Esophagus squamous epithelium (tissue), 5 donors: ENCODE measurements at regions of chr3 and their contacts with region 1.

Region 1: DNA sequence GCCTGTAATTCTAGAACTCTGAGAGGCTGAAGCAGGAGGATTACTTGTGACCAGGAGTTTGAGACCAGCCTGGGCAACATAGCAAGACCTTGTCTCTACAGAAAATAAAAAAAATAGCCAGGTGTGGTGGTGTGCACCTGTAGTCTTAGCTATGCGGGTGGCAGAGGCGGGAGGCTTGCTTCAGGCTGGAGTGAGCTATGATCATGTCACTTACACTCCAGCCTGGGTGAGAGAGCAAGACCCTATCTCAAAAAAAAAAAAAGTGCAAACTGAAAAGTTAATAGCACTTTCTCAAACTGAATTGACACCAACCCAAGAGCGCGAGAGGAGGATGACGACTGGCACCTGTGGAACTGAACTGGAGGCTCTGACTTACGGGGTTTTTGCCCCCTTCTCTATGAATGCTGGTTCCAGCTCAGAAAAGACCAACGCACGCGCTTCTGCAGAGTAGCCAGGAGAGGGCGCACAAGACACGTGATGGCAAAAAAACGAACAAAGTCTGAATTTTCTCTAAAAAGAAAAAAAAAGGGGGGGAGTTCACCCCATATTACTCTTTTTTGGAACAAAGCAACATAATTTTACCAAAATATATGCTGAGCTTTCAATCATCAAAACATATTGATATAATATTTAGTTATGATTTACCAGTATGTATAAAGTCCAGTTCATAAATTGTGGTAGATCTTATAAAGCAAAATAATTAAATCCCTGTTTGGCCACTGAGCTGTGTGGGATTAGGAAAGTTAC is 23.7 kb downstream of the CFAP92 start:
- DNase-seq: no peak
- H3K4me3 ChIP-seq: no peak overlapping the region
- H3K27ac ChIP-seq: peak overlapping the region in 1 of 4 donors; percentile 71
- H3K4me1 ChIP-seq: peaks cover 0 to 31% (median 4%) of the 10 kb centered on the region in 3 donors
- H3K27me3 ChIP-seq: no peaks in the 10 kb centered on the region
- CTCF ChIP-seq: peak; percentile 50 to 92 (median 86)
- POLR2A ChIP-seq: no peak

Region 2: DNA sequence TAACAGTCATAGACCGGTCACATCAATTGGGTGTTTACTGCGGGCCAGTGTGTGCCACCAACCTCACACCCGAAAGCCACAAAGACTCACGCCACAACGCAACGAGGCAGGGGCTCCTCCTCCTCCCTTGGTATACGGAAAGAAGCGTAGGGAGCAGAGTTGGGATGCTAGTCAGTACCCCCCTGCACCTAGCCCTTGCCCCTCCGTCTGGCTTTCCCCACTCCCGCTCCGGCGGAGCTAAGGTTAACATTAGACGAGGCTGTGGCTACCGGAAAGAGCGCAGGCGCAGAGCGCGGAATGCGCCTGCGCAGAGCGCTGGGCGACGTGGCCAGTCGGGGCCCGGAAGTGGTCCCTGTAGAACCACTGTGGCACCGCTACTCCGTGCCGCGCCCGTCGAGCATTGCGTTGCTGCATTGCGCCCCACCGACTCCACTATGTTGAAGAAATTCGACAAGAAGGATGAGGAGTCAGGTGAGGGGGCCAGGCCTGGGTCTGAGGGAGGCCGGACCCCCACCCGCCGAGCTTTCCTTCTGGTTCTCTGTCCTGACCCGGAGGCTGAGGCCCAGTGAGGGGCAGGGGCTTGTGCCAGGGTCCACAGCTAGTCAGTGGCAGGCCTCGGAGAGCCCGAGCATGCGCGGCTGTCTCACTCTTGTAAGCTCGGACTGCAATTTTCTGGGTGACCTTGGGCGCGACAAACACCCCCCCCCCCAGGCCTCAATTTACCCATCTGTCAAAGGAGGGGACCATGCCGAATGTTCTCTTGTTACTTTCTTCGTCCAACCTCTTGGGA is 279.3 kb after region 1 on chr3 and contains the start of gene COPG1:
- intact Hi-C with region 1: loop called (anchors 10 kb)
- DNase-seq: peak; percentile 26
- H3K4me3 ChIP-seq: peak within 1 kb of the TSS; percentile 85 to 100 (median 90)
- H3K27ac ChIP-seq: peak within 1 kb of the TSS; percentile 90 to 93 (median 92)
- H3K4me1 ChIP-seq: peaks cover 13 to 53% (median 31%) of the 10 kb centered on the region in 3 donors
- H3K27me3 ChIP-seq: no peaks in the 10 kb centered on the region
- CTCF ChIP-seq: peak in 1 of 6 experiments; percentile 41
- POLR2A ChIP-seq: peak in 3 of 4 donors; percentile 73 to 95 (median 85)
- total RNA-seq, gene COPG1: 68.3 to 121 (median 104) TPM